ENCODE measurements at regions of chr12 and their contacts with region 1.

Region 1: GRCh38 chr12:27523642-27524493 is at the start of gene PPFIBP1:
- DNase-seq: peak; percentile 99 to 100
- H3K4me3 ChIP-seq: peak within 1 kb of the TSS; percentile 62
- H3K4me3 Mint-ChIP-seq: peak within 1 kb of the TSS; percentile 80
- H3K27ac Mint-ChIP-seq: peak within 1 kb of the TSS; percentile 98
- H3K4me1 ChIP-seq: peaks cover 22% of the 10 kb centered on the region
- H3K4me1 Mint-ChIP-seq: peaks cover 30% of the 10 kb centered on the region
- H3K27me3 ChIP-seq: no peaks in the 10 kb centered on the region
- H3K27me3 Mint-ChIP-seq: no peaks in the 10 kb centered on the region
- CTCF ChIP-seq: peak; percentile 16 to 36
- total RNA-seq, gene PPFIBP1: 109 and 134 TPM in 2 replicates

Region 2: GRCh38 chr12:27424631-27425230 is 99.1 kb before region 1 on chr12:
- CTCF ChIA-PET with region 1: interaction called, 15 read pairs
- POLR2A ChIA-PET with region 1: interaction called, 5 read pairs
- intact Hi-C with region 1: loop called (anchors 5 kb)
- DNase-seq: peak in 1 of 2 experiments; percentile 51
- H3K4me3 ChIP-seq: no peak overlapping the region
- H3K4me3 Mint-ChIP-seq: no peak overlapping the region
- H3K27ac Mint-ChIP-seq: no peak overlapping the region
- H3K4me1 ChIP-seq: 0 out of 2 replicates have a peak, but pooled peaks cover 3% of the 10 kb centered on the region
- H3K4me1 Mint-ChIP-seq: peaks cover 22% of the 10 kb centered on the region
- H3K27me3 ChIP-seq: no peaks in the 10 kb centered on the region
- H3K27me3 Mint-ChIP-seq: no peaks in the 10 kb centered on the region
- CTCF ChIP-seq: peak; percentile 74 to 79

Region 3: DNA sequence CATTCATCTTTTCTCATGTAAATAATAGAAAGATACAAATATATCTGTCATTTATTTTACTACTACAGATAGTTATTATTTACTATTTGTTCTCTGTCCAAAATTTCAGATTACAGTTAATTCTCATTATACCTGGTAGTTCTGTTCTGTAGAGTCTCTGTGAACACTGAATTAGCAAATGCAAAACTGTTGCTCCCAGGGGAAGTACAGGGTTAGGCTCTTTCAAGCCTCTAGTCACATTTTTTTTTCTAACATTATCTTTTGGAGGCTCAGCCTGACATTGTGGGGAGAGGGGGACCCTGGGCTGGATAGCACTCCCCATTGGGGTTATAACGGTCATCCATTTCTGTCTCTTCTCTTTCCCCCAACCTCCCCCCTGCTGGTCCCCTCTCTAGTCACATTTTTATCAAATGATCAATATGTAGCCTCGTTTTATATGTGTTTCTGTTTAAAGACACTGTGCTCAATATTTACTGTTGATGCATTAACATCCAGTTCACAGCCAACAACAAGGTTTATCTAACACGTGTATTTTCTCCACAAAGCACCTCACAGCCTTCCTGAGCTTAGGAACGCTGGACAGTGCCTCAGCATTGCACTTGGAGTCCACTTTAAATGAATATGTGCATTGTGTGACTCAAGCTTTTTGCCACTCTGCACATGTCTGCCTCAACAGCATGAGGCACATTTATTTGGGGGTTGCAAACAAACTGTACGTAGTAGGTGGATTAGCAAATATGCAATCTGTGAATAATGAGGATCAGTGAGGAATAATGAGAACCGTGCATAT is 72.6 kb before region 1 on chr12:
- CTCF ChIA-PET with region 1: no interaction called
- POLR2A ChIA-PET with region 1: interaction called, 10 read pairs
- intact Hi-C with region 1: no loop called
- DNase-seq: no peak
- H3K4me3 ChIP-seq: no peak overlapping the region
- H3K4me3 Mint-ChIP-seq: no peak overlapping the region
- H3K27ac Mint-ChIP-seq: no peak overlapping the region
- H3K4me1 ChIP-seq: peaks cover 16% of the 10 kb centered on the region
- H3K4me1 Mint-ChIP-seq: peaks cover 6% of the 10 kb centered on the region
- H3K27me3 ChIP-seq: no peaks in the 10 kb centered on the region
- H3K27me3 Mint-ChIP-seq: no peaks in the 10 kb centered on the region
- CTCF ChIP-seq: no peak

Region 4: DNA sequence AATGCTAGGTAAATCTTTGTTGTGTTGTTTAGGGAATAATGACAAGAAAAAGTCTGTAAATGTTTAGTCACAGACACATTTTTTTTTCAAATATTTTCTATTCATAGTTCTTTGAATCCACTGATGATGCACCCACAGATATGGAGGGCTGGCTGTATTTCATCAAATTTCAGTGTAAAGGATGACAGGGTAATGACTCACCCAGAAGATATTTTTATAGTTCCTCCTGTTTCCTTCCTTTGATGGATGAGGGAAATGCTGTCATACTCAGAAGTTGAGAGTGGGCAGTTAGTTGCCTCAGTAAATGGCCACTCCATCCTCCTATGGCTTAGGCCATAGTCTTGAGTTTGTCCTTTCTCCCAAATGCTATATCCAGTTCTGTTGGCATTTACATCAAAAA is 95.4 kb after region 1 on chr12:
- CTCF ChIA-PET with region 1: no interaction called
- POLR2A ChIA-PET with region 1: no interaction called
- intact Hi-C with region 1: loop called (anchors 5 kb)
- DNase-seq: peak in 1 of 2 experiments; percentile 49
- H3K4me3 ChIP-seq: no peak overlapping the region
- H3K4me3 Mint-ChIP-seq: no peak overlapping the region
- H3K27ac Mint-ChIP-seq: peak overlapping the region; percentile 70
- H3K4me1 ChIP-seq: peaks cover 60% of the 10 kb centered on the region
- H3K4me1 Mint-ChIP-seq: peaks cover 70% of the 10 kb centered on the region
- H3K27me3 ChIP-seq: no peaks in the 10 kb centered on the region
- H3K27me3 Mint-ChIP-seq: no peaks in the 10 kb centered on the region
- CTCF ChIP-seq: no peak

Region 5: DNA sequence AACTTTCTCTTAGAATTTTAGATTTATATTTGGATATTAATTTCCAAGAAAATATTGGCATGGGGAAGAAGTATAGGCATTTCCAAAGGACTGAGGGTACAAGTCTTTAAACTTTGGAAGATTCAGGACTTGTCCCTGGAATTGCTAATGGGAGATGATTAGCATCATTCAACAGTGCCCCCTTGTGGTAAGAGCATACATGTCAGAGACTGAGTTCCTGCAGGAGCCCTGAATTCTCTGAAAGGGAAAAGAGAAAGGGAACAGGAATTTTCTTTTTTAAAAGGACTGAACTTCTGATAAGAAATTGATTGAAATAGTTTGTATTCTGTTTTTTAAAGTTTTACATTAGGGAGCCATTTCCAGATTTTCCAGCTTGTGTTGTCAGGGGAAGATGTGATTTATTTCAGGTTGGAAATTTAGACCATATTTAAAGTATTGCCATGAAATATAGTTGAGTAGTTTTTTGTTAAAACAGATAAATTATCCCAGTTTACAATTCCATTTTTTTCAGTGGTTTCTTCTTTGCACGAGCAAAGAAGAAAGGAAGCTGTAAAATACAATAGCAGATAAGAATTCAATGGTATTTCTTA is 128.4 kb after region 1 on chr12:
- CTCF ChIA-PET with region 1: no interaction called
- POLR2A ChIA-PET with region 1: no interaction called
- intact Hi-C with region 1: loop called (anchors 5 kb)
- DNase-seq: peak; percentile 69 to 88
- H3K4me3 ChIP-seq: no peak overlapping the region
- H3K4me3 Mint-ChIP-seq: no peak overlapping the region
- H3K27ac Mint-ChIP-seq: no peak overlapping the region
- H3K4me1 ChIP-seq: no peaks in the 10 kb centered on the region
- H3K4me1 Mint-ChIP-seq: peaks cover 12% of the 10 kb centered on the region
- H3K27me3 ChIP-seq: no peaks in the 10 kb centered on the region
- H3K27me3 Mint-ChIP-seq: no peaks in the 10 kb centered on the region
- CTCF ChIP-seq: peak; percentile 91 to 96

Region 6: DNA sequence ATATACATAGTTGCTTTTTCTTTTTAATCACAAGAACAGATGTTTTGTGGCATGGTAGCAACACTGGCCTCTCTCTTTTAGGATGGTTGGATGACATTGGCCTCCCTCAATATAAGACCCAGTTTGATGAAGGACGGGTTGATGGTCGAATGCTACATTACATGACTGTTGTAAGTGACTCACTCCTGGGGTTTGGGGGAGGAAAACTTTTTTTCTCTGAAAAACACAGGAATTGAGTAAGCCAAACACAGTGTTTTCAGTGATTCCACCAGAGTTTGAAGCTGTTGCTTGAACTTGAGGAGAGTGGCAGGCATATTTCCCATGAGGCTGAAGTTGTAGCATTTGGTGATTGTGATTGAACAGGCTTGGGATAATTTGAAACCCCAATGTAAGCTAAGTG is 158.7 kb after region 1 on chr12:
- CTCF ChIA-PET with region 1: no interaction called
- POLR2A ChIA-PET with region 1: no interaction called
- intact Hi-C with region 1: no loop called
- DNase-seq: no peak
- H3K4me3 ChIP-seq: no peak overlapping the region
- H3K4me3 Mint-ChIP-seq: no peak overlapping the region
- H3K27ac Mint-ChIP-seq: no peak overlapping the region
- H3K4me1 ChIP-seq: peaks cover 5% of the 10 kb centered on the region; the same call in 1 of the 2 replicates
- H3K4me1 Mint-ChIP-seq: peaks cover 6% of the 10 kb centered on the region
- H3K27me3 ChIP-seq: no peaks in the 10 kb centered on the region
- H3K27me3 Mint-ChIP-seq: no peaks in the 10 kb centered on the region
- CTCF ChIP-seq: no peak

Measured in Caco-2 (cell line).